Naive thymus-derived CD8-positive, alpha-beta T cell (primary cell): ENCODE measurements at regions of chr7 and their contacts with region 1.

Region 1: DNA sequence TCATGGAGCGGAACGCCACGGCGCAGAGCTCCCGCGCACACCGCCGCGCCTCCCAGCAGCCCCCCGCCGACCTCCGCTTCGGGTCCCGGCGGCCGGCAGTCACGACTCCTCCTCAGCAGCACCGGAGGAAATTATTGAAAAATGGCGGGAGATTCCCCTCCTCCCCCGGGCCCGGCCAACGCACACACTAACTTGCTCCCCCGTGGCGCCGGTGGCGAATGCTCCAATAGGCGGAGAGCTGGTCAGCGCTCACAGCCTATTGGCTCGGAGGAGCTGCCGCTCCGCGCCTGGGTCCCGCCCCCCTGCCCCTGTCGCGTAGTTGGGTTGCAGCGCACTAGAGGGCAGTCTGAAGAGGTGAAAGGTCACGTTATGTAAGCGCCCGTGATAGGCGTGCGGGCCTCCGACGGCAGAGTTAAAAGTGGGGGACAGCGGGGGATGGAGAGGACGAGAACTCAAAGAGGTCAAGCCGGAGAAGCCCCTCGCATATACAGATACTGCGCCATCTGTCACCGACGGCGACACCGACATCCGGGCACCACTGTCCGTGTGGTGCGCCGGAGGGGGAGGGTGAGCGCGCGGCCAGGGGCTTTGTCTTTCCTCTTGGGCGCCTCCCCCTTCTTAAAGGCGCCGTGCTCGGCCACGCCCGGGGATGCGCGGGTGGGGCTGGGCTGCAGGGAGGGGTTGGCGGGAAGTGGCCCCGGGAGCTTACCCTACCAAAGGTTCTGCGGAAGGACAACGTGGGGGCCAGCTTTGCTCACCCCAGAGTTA is at the start of gene BAZ1B:
- DNase-seq: peak; percentile 91 to 98 (median 94)
- ATAC-seq: peak; percentile 92
- H3K4me3 Mint-ChIP-seq: peak within 1 kb of the TSS; percentile 90 to 99 (median 96)
- H3K27ac Mint-ChIP-seq: peak within 1 kb of the TSS; percentile 98 to 100 (median 99)
- H3K4me1 Mint-ChIP-seq: peaks cover 39 to 76% (median 69%) of the 10 kb centered on the region in 4 donors
- H3K27me3 Mint-ChIP-seq: no peaks in the 10 kb centered on the region
- polyA plus RNA-seq, gene BAZ1B: 12.1 to 27.0 (median 17.0) TPM

Region 2: DNA sequence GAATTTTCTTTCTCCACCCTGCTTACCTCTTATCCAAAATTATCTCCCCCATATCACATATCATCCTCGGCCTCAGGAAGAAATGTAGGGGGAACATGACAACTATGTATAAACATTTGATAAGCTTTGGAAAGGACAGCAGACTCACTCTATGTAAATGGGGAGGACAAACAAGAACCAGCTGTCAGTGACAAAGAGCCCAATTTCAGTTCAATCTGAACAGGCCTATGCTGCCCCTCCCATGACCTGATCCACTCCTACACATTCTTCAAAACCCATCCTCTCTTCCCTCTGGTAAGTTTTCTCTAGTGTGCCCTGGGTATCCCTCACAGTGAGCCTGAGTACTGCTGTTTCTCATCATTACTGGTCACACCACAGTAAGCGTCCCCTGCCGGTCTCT is 67.9 kb before region 1 on chr7:
- POLR2A ChIA-PET with region 1: no interaction called
- DNase-seq: no peak
- ATAC-seq: no peak
- H3K4me3 Mint-ChIP-seq: no peak overlapping the region
- H3K27ac Mint-ChIP-seq: peak overlapping the region in 2 of 10 donors; percentile 22 to 65
- H3K4me1 Mint-ChIP-seq: peaks cover 2 to 17% (median 10%) of the 10 kb centered on the region in 4 donors
- H3K27me3 Mint-ChIP-seq: no peaks in the 10 kb centered on the region

Region 3: GRCh38 chr7:73557108-73557396 is 34.8 kb after region 1 on chr7:
- POLR2A ChIA-PET with region 1: interaction called, 81 read pairs
- DNase-seq: peak; percentile 85 to 93 (median 90)
- ATAC-seq: peak; percentile 90 to 93
- H3K4me3 Mint-ChIP-seq: peak overlapping the region; percentile 89 to 97 (median 94)
- H3K27ac Mint-ChIP-seq: peak overlapping the region in 9 of 10 donors; percentile 92 to 98 (median 95)
- H3K4me1 Mint-ChIP-seq: peaks cover 20 to 38% (median 35%) of the 10 kb centered on the region in 4 donors
- H3K27me3 Mint-ChIP-seq: no peaks in the 10 kb centered on the region

Region 4: GRCh38 chr7:73565675-73566340 is 43.5 kb after region 1 on chr7:
- POLR2A ChIA-PET with region 1: interaction called, 11 read pairs
- DNase-seq: no peak
- ATAC-seq: peak; percentile 39 to 49
- H3K4me3 Mint-ChIP-seq: peak overlapping the region; percentile 65 to 86 (median 84)
- H3K27ac Mint-ChIP-seq: peak overlapping the region; percentile 29 to 88 (median 82)
- H3K4me1 Mint-ChIP-seq: peaks cover 11 to 38% (median 23%) of the 10 kb centered on the region in 4 donors
- H3K27me3 Mint-ChIP-seq: no peaks in the 10 kb centered on the region

Region 5: DNA sequence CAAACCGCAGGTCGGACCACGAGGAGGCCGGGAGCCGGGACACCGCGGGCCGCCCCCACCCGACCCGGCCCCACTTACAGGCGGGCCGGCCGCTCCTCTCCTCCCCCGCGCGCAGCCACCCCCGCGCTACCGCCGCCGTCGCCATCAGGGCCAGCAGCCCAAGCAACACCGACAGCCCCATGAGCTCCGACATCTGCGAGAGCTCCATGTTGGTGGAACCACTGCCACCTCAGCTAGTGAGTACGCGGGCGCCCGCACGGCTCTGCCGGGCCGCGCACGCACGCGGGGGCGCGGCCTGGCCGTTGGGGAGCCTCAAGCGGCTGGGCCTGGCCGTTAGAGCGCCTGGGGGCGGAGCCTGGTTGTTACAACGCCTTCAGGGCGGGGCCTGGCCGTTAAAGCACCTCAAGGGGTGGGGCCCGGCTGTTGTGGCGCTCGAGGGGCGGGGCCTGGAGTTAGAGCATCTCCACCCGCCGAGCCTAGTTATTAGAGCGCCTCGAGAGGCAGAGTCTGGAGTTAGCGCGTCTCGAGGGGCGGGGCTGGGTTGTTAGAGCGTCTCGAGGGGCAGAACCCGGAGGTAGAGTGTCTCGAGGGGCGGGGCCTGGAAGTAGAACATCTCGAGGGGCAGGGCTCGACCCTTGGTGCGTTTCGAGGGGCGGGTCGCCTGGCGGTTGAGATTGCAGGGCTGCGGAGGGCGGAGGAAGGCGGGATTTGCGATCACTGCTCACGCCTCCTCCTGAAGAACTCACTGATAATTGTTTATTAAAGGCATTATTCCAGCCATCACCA is 56.2 kb after region 1 on chr7 and contains the start of gene TBL2:
- POLR2A ChIA-PET with region 1: interaction called, 34 read pairs
- DNase-seq: peak; percentile 92 to 99 (median 98)
- ATAC-seq: peak; percentile 86 to 91
- H3K4me3 Mint-ChIP-seq: peak within 1 kb of the TSS; percentile 91 to 100 (median 97)
- H3K27ac Mint-ChIP-seq: peak within 1 kb of the TSS; percentile 95 to 100 (median 98)
- H3K4me1 Mint-ChIP-seq: peaks cover 15 to 37% (median 30%) of the 10 kb centered on the region in 4 donors
- H3K27me3 Mint-ChIP-seq: no peaks in the 10 kb centered on the region
- polyA plus RNA-seq, gene TBL2: 13.4 to 19.6 (median 18.4) TPM

Region 6: DNA sequence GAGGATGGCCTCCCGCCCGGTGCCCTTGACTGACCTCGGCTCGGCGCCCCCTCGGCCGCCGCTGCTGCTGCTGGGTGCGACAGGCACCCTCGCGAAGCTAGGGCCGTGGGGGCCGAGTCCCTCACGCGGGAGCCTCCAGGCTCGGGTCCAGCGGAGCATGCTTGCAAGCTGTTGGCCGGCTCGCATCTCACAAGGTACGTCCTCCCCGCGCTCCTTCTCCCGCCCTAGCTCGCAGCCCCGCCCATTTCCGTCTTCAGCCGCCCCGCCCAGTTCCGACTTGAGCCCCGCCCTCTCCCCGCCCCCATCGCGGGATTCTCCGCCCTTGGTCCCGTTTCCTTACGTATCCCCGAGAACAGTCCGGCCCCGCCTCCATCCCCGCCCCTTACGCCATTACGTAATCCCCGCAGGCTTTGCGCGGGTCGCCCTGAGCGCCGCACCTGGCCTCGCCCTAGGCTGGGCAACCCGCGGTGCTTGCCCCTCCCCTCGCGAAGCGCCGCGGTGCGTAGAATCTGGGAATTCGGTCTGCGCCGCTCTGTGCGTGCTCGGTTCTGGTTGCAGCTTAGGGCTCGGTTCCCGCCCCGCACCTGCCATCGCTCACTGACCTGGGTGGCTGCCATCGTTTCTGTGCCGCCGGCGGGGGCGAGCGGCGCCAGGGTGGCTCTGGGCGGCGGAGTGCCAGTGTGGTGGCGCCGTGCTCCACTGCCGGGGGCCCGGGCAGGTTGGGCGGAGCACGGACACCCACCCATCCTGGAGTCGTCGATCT is 216.5 kb after region 1 on chr7 and contains the start of gene ABHD11:
- POLR2A ChIA-PET with region 1: interaction called, 10 read pairs
- DNase-seq: peak; percentile 95 to 99 (median 98)
- ATAC-seq: peak; percentile 81 to 90
- H3K4me3 Mint-ChIP-seq: peak within 1 kb of the TSS; percentile 88 to 95 (median 92)
- H3K27ac Mint-ChIP-seq: peak within 1 kb of the TSS; percentile 83 to 98 (median 94)
- H3K4me1 Mint-ChIP-seq: peaks cover 6 to 23% (median 19%) of the 10 kb centered on the region in 4 donors
- H3K27me3 Mint-ChIP-seq: no peaks in the 10 kb centered on the region
- polyA plus RNA-seq, gene ABHD11: 5.4 to 12.3 (median 10.0) TPM